ENCODE measurements at regions of chr9 and their contacts with region 1.

Region 1: GRCh38 chr9:128322404-128323211 is at the starts of genes COQ4 and TRUB2:
- DNase-seq: peak; percentile 94 to 95
- H3K4me3 ChIP-seq: peak within 1 kb of the TSS; percentile 33 to 94 (median 82)
- H3K27ac ChIP-seq: peak within 1 kb of the TSS; percentile 85 to 96 (median 92)
- H3K4me1 ChIP-seq: peaks cover 5 to 22% of the 10 kb centered on the region in 2 donors
- H3K27me3 ChIP-seq: no peaks in the 10 kb centered on the region
- CTCF ChIP-seq: peak in 1 of 6 experiments; percentile 3
- POLR2A ChIP-seq: peak in 1 of 2 donors; percentile 31
- total RNA-seq, gene COQ4: 71.8 to 137 (median 108) TPM
- total RNA-seq, gene TRUB2: 8.3 to 19.2 (median 16.6) TPM

Region 2: DNA sequence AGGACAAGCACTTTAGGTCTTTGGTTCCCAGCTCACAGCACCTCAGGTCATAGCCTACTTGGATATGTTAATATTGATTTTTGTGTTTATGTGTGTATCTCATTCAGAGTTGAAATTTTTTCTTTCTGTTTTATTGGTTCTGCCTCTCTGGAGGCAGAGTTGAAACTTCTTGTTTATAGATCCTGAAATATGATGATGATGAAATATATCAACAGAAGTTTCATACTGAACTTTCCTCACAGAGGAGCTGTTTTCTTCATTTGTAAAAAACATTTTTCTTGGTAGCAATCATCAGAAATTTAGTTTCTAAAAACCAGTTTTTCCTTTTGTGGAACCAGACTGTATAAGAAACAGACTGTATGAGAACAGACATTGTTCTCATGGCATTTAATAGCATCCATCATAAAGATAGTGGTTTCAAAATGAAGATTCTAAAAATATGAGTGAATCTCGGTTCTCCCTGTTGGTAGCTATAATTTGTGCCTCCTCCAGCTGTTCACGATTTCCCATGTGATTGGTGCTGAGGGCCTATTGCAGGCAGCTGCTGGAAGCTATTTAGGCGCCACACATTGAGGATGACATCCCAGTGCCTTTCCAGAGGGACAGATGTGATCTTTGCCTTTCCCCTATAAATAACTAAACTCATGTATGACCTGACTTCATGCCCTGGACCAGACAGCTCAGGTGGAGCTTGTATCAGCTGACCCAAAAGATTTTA is 655.3 kb before region 1 on chr9:
- intact Hi-C with region 1: no loop called
- DNase-seq: no peak
- H3K4me3 ChIP-seq: no peak overlapping the region
- H3K27ac ChIP-seq: no peak overlapping the region
- H3K4me1 ChIP-seq: no peaks in the 10 kb centered on the region
- H3K27me3 ChIP-seq: no peaks in the 10 kb centered on the region
- CTCF ChIP-seq: no peak
- POLR2A ChIP-seq: no peak

Region 3: DNA sequence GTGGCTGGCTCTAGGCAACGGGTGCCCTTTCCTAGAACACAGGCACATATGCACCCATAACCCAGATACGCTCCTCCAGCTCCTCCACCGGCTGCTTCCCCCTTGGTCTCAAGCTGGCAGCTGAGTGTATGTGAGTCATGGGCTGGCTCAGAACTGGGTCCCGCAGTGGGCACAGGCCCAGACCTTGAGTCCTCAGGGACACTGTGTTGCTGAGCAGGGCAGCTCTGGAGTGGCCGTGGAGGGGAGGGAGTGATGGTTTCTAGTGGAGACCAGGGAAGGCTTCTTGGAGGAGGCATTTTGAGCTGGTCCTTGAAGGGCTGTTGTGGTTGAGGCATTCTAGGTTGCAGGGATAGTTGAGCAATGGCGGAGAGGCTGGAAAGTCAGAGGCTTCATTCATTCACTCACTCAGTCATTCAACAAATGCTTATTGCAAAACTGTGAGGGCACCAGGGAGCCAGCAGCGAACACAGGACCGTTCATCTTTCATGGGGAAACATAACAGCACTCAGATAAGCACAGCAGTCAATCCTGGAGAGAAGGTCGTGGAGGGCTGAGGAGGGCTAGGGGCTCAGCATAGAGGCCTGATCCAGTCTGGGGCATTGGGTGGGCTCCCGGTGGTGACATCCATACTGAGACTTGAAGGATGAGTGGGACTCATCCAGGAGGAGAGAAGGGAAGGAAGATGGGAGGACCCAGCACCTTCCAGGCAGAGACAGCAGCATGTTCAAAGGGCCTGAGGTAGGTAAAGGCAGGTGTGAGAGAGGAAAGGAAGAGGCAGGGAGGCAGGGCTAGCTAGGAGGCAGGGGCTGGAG is 160.2 kb before region 1 on chr9:
- intact Hi-C with region 1: no loop called
- DNase-seq: peak in 1 of 2 donors; percentile 26
- H3K4me3 ChIP-seq: no peak overlapping the region
- H3K27ac ChIP-seq: no peak overlapping the region
- H3K4me1 ChIP-seq: peaks cover 7 to 8% of the 10 kb centered on the region in 2 donors
- H3K27me3 ChIP-seq: no peaks in the 10 kb centered on the region
- CTCF ChIP-seq: no peak
- POLR2A ChIP-seq: no peak

Region 4: DNA sequence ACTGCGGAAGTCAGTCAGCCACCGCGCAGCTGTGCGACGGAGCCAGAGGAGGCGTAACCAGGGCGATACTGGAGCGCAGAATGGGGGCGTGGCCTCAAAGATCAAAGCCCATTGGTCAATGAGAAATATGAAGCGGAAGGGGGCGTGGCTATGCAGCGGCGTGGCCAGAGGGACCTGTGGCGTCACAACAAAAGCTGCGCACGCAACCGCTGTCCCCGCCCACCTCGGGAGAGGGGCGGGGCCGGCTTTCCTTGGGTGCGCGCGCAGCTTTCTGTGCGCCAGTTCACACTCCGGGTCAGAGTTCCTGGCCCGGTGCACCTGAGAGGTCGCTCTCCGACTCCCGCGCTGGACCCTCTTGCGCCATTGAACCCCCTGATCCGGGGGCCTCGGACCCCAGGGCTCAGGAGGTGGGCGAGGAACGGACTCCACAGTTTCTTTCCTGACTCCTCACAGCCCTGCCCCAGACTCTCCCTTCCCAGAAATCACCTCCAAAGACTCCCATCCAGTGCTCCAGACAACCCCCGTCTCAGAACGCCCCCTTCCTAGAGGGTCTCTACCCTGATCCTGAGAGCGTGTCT is 46.5 kb before region 1 on chr9 and contains the starts of genes GOLGA2 and SWI5:
- intact Hi-C with region 1: loop called (anchors 5 kb)
- DNase-seq: peak; percentile 100
- H3K4me3 ChIP-seq: peak within 1 kb of the TSS; percentile 66 to 97 (median 70)
- H3K27ac ChIP-seq: peak within 1 kb of the TSS; percentile 16 to 88 (median 85)
- H3K4me1 ChIP-seq: peaks cover 22 to 44% of the 10 kb centered on the region in 2 donors
- H3K27me3 ChIP-seq: no peaks in the 10 kb centered on the region
- CTCF ChIP-seq: no peak
- POLR2A ChIP-seq: peak; percentile 90 to 92
- total RNA-seq, gene GOLGA2: 94.6 to 140 (median 118) TPM
- total RNA-seq, gene SWI5: 18.5 to 50.2 (median 49.2) TPM

Region 5: GRCh38 chr9:128607642-128608350 is 285.2 kb after region 1 on chr9:
- intact Hi-C with region 1: no loop called
- DNase-seq: peak; percentile 20 to 50
- H3K4me3 ChIP-seq: no peak overlapping the region
- H3K27ac ChIP-seq: peak overlapping the region in 1 of 3 donors; percentile 1
- H3K4me1 ChIP-seq: no peaks in the 10 kb centered on the region
- H3K27me3 ChIP-seq: no peaks in the 10 kb centered on the region
- CTCF ChIP-seq: no peak
- POLR2A ChIP-seq: no peak